ENCODE measurements at regions of chr13 and their contacts with region 1.

Region 1: DNA sequence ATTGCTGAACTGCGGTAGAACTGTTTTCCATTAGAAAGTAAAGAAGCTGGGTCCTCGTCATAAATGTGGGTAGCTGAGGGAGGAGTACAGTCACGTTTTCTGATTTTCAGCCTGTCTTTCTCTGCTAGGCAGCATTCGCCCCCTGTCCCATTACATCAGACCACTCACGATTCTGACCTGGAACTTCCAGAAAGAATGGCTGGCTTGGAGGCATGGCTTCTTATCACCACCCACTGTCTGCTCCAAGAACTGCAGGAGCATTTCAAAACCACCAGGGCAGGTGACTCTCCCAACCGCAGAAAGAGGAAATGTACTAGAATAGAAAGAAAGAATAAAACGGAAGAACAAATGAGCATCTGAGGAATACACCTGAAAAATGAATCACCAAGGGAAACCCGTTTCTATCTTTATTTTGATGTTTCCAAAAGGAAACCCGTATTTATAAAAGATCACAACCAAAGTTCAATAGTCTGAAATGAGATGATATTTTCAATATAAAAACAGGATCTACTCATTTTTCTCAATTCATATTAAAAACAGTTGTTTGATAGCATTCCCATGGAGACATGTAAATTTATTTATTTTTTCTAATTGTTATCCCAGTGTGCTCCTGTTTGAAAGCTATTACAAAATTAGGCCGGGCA is 22.1 kb upstream of the POMP start:
- DNase-seq: peak; percentile 37
- H3K4me3 Mint-ChIP-seq: peak overlapping the region; percentile 1
- H3K27ac Mint-ChIP-seq: peak overlapping the region; percentile 15
- H3K4me1 Mint-ChIP-seq: peaks cover 9% of the 10 kb centered on the region
- H3K27me3 Mint-ChIP-seq: peaks cover 29% of the 10 kb centered on the region

Region 2: GRCh38 chr13:28058866-28059624 is 577.8 kb before region 1 on chr13:
- intact Hi-C with region 1: loop called (anchors 1 kb)
- DNase-seq: peak; percentile 8
- H3K4me3 Mint-ChIP-seq: no peak overlapping the region
- H3K27ac Mint-ChIP-seq: no peak overlapping the region
- H3K4me1 Mint-ChIP-seq: no peaks in the 10 kb centered on the region
- H3K27me3 Mint-ChIP-seq: peaks cover 21% of the 10 kb centered on the region

Region 3: DNA sequence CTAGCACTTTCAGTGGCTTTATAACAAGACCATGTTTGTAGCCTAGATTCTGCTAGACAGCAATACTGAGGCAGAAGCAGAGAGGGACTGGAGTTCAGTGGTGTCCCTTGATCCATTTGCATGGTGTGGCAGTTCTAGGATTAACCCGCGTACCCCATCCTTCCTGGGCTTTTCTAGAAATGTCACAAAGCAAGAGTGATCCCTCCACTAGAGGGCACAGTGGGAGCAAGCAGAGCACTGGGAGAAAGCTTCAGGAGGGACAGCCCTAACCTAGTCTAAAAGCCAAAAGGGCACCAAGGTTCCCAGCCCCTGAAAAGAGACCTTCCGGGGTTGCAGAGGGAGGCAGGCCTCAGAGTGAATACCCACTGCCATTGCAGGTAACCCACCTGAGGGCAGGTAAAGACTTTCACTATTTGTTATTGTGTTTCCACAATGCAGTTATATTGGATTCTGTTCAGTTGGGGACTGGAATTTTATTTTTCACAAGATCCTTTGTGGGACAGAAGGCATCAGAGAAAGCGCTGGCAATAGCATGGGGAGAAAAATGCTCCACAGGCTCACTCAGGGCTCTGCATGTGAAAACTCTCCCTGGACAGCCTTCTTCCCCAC is 312.5 kb before region 1 on chr13:
- intact Hi-C with region 1: loop called (anchors 2 kb)
- DNase-seq: peak; percentile 36
- H3K4me3 Mint-ChIP-seq: no peak overlapping the region
- H3K27ac Mint-ChIP-seq: no peak overlapping the region
- H3K4me1 Mint-ChIP-seq: no peaks in the 10 kb centered on the region
- H3K27me3 Mint-ChIP-seq: peaks cover 3% of the 10 kb centered on the region

Region 4: GRCh38 chr13:28401303-28402056 is 235.3 kb before region 1 on chr13:
- intact Hi-C with region 1: loop called (anchors 5 kb)
- DNase-seq: no peak
- H3K4me3 Mint-ChIP-seq: no peak overlapping the region
- H3K27ac Mint-ChIP-seq: peak overlapping the region; percentile 59
- H3K4me1 Mint-ChIP-seq: peaks cover 10% of the 10 kb centered on the region
- H3K27me3 Mint-ChIP-seq: no peaks in the 10 kb centered on the region

Region 5: GRCh38 chr13:28493740-28494503 is 142.9 kb before region 1 on chr13:
- intact Hi-C with region 1: loop called (anchors 1 kb)
- DNase-seq: no peak
- H3K4me3 Mint-ChIP-seq: peak overlapping the region; percentile 85
- H3K27ac Mint-ChIP-seq: no peak overlapping the region
- H3K4me1 Mint-ChIP-seq: peaks cover 49% of the 10 kb centered on the region
- H3K27me3 Mint-ChIP-seq: peaks cover 41% of the 10 kb centered on the region

Region 6: GRCh38 chr13:28574617-28575142 is 62.1 kb before region 1 on chr13:
- intact Hi-C with region 1: no loop called
- DNase-seq: peak; percentile 6
- H3K4me3 Mint-ChIP-seq: no peak overlapping the region
- H3K27ac Mint-ChIP-seq: peak overlapping the region; percentile 84
- H3K4me1 Mint-ChIP-seq: peaks cover 16% of the 10 kb centered on the region
- H3K27me3 Mint-ChIP-seq: peaks cover 9% of the 10 kb centered on the region

Region 7: GRCh38 chr13:28830580-28830979 is 193.8 kb after region 1 on chr13:
- intact Hi-C with region 1: no loop called
- DNase-seq: no peak
- H3K4me3 Mint-ChIP-seq: no peak overlapping the region
- H3K27ac Mint-ChIP-seq: no peak overlapping the region
- H3K4me1 Mint-ChIP-seq: no peaks in the 10 kb centered on the region
- H3K27me3 Mint-ChIP-seq: peaks cover 2% of the 10 kb centered on the region

Measured in activated T-helper 1 cell treated with anti-CD3 and anti-CD28 coated beads, Interleukin-12 subunit alpha, Interleukin-12 subunit beta, Interleukin-2, Interleukin-4 antibody, amounts not matched to agents 30 ng/mL and 10 ng/mL and 1 ng/mL, durations not matched to agents 14 hours and 24 hours and 36 hours (primary cell).